Caco-2 (cell line): ENCODE measurements at regions of chr12 and their contacts with region 1.

Region 1: GRCh38 chr12:51351913-51352532 is 5.5 kb upstream of the CELA1 start:
- DNase-seq: peak; percentile 52 to 65
- H3K4me3 ChIP-seq: no peak overlapping the region
- H3K4me3 Mint-ChIP-seq: no peak overlapping the region
- H3K27ac Mint-ChIP-seq: no peak overlapping the region
- H3K4me1 ChIP-seq: 0 out of 2 replicates have a peak, but pooled peaks cover 10% of the 10 kb centered on the region
- H3K4me1 Mint-ChIP-seq: peaks cover 11% of the 10 kb centered on the region
- H3K27me3 ChIP-seq: no peaks in the 10 kb centered on the region
- H3K27me3 Mint-ChIP-seq: no peaks in the 10 kb centered on the region
- CTCF ChIP-seq: peak; percentile 64 to 65

Region 2: DNA sequence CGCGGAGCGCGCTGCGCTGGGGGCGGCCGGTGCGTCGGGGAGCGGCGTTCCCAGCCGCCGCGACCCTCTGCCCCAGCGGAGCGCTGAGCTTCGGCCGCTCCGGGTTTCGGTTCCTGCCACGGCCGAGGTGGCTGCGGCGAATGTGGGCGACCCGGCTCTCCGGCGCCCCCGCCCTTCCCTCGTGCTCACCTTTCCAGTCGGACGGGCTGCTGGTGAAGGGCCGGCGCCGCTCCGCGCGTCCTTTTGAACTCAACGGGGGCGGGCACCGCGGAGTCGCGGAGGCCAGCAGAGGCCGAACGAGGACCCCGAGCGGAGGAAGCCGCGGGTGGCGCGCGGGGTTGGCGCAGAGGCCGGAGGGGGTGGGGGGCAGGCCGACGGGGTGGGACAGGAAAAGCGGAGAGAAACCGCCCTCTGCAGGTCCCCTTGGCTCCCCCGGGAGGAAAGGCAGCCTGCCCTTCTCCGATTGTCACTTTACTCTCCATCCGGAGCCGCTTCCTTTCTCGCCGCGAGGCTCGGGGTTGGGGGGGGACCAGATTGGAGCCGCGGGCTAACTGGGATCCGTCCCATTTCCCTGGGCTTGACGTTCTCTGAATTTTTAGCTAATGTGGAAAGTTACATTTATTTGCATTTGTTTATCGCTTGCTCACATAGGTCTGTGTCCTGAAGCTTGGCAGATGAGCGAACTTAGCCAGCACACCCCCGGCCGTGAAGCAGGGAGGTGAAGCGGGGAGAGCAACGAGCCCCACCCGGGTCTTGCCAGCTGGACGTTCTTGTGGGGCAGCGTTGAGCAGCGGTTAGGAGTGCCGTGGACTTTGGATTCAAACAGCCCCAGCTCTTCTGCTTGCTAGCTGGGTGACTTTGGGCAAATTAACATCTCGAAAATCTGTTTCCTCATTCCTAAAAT is 81.7 kb before region 1 on chr12 and contains the start of gene SMAGP:
- CTCF ChIA-PET with region 1: interaction called, 19 read pairs
- POLR2A ChIA-PET with region 1: interaction called, 3 read pairs
- intact Hi-C with region 1: no loop called
- DNase-seq: peak; percentile 94 to 99
- H3K4me3 ChIP-seq: peak within 1 kb of the TSS; percentile 85
- H3K4me3 Mint-ChIP-seq: peak within 1 kb of the TSS; percentile 87
- H3K27ac Mint-ChIP-seq: peak within 1 kb of the TSS; percentile 99
- H3K4me1 ChIP-seq: peaks cover 21% of the 10 kb centered on the region
- H3K4me1 Mint-ChIP-seq: peaks cover 19% of the 10 kb centered on the region
- H3K27me3 ChIP-seq: no peaks in the 10 kb centered on the region
- H3K27me3 Mint-ChIP-seq: no peaks in the 10 kb centered on the region
- CTCF ChIP-seq: peak; percentile 1 to 12
- total RNA-seq, gene SMAGP: 95.1 and 108 TPM in 2 replicates

Region 3: DNA sequence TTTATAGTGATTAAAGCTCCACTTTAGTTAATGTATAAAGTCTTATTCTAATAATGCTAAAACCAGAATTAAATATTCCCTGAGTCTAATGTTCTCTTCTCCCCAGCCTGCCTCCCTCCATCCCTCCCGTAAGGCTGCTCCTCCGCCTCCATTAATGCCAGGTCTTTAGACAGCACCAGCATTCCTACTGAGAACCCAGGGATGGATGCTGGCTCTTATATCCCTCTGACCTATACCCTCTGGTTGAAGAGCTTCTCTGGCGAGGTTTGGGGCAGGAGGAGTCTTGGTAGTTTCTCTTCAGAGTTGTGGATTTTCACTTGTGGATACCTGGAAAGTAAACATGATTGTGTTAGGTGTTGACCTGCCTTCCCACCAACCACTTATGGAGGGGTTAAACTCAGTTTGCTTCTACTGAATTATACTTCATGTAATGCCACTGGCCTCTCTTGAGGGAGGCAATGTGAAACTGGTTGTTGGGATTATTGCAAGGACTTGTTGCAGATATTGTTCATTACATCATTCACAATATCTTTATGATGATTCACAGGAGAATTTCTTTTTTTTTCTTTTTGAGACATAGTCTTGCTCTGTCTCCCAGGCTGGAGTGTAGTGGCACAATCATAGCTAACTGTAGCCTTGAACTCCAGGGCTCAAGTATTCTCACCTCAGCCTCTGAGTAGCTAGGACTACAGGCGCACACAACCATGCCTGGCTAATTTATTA is 70.7 kb before region 1 on chr12:
- CTCF ChIA-PET with region 1: no interaction called
- POLR2A ChIA-PET with region 1: no interaction called
- intact Hi-C with region 1: no loop called
- DNase-seq: no peak
- H3K4me3 ChIP-seq: no peak overlapping the region
- H3K4me3 Mint-ChIP-seq: no peak overlapping the region
- H3K27ac Mint-ChIP-seq: no peak overlapping the region
- H3K4me1 ChIP-seq: no peaks in the 10 kb centered on the region
- H3K4me1 Mint-ChIP-seq: peaks cover 6% of the 10 kb centered on the region
- H3K27me3 ChIP-seq: no peaks in the 10 kb centered on the region
- H3K27me3 Mint-ChIP-seq: no peaks in the 10 kb centered on the region
- CTCF ChIP-seq: no peak